PC-3 (cell line): ENCODE measurements at regions of chr10 and their contacts with region 1.

Region 1: DNA sequence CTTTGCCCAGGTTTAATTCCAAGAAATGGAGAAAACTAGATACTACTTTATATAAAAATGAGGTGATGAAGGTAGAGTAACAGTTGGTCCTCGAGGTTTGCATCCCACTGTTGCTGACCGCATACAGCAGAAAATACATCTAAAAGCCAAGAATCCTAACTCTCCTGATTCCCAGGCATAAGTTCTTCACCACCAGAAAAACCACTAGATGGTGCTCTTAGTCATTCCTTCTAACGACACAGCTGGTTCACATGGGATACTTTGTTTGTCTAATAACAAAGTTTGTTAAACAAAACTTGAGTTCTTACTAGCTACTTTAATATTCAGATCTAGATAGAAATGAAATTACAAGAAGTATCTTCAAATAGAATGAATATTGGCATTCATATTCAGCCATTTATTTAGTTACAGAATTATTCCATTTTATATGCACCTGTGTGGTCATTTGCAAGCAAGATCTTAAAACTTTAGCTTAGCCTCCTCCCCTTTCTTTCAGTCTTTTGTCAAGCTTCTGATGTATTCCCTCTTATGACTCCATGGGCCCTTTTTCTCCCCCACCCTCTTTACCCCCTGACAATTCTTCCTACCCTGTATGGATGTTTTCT is 54.1 kb upstream of the CYP26C1 start:
- DNase-seq: peak; percentile 68
- ATAC-seq: peak; percentile 77
- H3K4me3 ChIP-seq: no peak overlapping the region
- H3K27ac ChIP-seq: no peak overlapping the region
- H3K4me1 ChIP-seq: no peaks in the 10 kb centered on the region
- H3K27me3 ChIP-seq: no peaks in the 10 kb centered on the region
- CTCF ChIP-seq: peak; percentile 82

Region 2: GRCh38 chr10:93034426-93034825 is 27.9 kb after region 1 on chr10:
- CTCF ChIA-PET with region 1: interaction called, 3 read pairs
- POLR2A ChIA-PET with region 1: no interaction called
- intact Hi-C with region 1: loop called (anchors 1 kb)
- DNase-seq: no peak
- ATAC-seq: no peak
- H3K4me3 ChIP-seq: no peak overlapping the region
- H3K27ac ChIP-seq: no peak overlapping the region
- H3K4me1 ChIP-seq: peaks cover 14% of the 10 kb centered on the region
- H3K27me3 ChIP-seq: no peaks in the 10 kb centered on the region
- CTCF ChIP-seq: no peak

Region 3: DNA sequence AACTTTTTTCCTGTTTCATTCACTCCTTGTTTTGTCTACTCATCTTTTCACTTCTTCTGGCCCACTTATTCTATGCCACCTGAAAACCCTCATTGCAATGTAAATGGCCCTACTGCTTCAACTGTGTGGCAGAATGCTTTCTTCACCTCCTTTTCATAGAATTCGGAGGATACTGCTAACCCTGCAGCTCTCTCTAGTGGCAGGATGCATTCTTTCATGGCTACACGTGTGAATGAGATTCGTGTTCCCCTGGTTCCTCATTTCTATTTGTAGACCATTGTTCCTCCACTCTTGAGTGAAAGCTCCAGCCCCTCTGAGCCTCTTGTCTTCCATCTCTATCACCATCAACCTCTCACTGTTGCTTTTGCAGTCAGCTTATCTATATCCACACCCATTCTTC is 33.2 kb after region 1 on chr10:
- CTCF ChIA-PET with region 1: interaction called, 3 read pairs
- POLR2A ChIA-PET with region 1: no interaction called
- intact Hi-C with region 1: loop called (anchors 1 kb)
- DNase-seq: peak; percentile 59
- ATAC-seq: peak; percentile 80
- H3K4me3 ChIP-seq: no peak overlapping the region
- H3K27ac ChIP-seq: no peak overlapping the region
- H3K4me1 ChIP-seq: no peaks in the 10 kb centered on the region
- H3K27me3 ChIP-seq: no peaks in the 10 kb centered on the region
- CTCF ChIP-seq: peak; percentile 64